ENCODE measurements at regions of chr7 and their contacts with region 1.

Region 1: GRCh38 chr7:43647673-43648472 is 65.0 kb downstream of the STK17A start:
- DNase-seq: peak; percentile 100
- ATAC-seq: peak; percentile 68
- H3K4me3 ChIP-seq: peak overlapping the region; percentile 1; the same call in 1 of the 2 replicates
- H3K27ac ChIP-seq: peak overlapping the region; percentile 95
- H3K4me1 ChIP-seq: peaks cover 42% of the 10 kb centered on the region
- H3K27me3 ChIP-seq: no peaks in the 10 kb centered on the region
- CTCF ChIP-seq: no peak
- POLR2A ChIP-seq: peak; percentile 79
- RAD21 ChIP-seq: no peak

Region 2: GRCh38 chr7:43693687-43694398 is 46.0 kb after region 1 on chr7:
- CTCF ChIA-PET with region 1: interaction called, 5 read pairs
- POLR2A ChIA-PET with region 1: no interaction called
- dilution Hi-C with region 1: no loop called
- in situ Hi-C with region 1: loop called (anchors 5 kb)
- intact Hi-C with region 1: no loop called
- DNase-seq: peak; percentile 81
- ATAC-seq: peak; percentile 43
- H3K4me3 ChIP-seq: no peak overlapping the region
- H3K27ac ChIP-seq: peak overlapping the region; percentile 61
- H3K4me1 ChIP-seq: peaks cover 19% of the 10 kb centered on the region
- H3K27me3 ChIP-seq: no peaks in the 10 kb centered on the region
- CTCF ChIP-seq: no peak
- POLR2A ChIP-seq: no peak
- RAD21 ChIP-seq: no peak

Region 3: GRCh38 chr7:43735802-43736541 is 88.1 kb after region 1 on chr7:
- CTCF ChIA-PET with region 1: no interaction called
- POLR2A ChIA-PET with region 1: interaction called, 16 read pairs
- dilution Hi-C with region 1: no loop called
- in situ Hi-C with region 1: no loop called
- intact Hi-C with region 1: no loop called
- DNase-seq: peak; percentile 37
- ATAC-seq: peak; percentile 40
- H3K4me3 ChIP-seq: no peak overlapping the region
- H3K27ac ChIP-seq: no peak overlapping the region
- H3K4me1 ChIP-seq: 0 out of 2 replicates have a peak, but pooled peaks cover 1% of the 10 kb centered on the region
- H3K27me3 ChIP-seq: peaks cover 4% of the 10 kb centered on the region; the same call in 1 of the 2 replicates
- CTCF ChIP-seq: no peak
- POLR2A ChIP-seq: no peak
- RAD21 ChIP-seq: no peak